ENCODE measurements at regions of chr7 and their contacts with region 1.

Region 1: DNA sequence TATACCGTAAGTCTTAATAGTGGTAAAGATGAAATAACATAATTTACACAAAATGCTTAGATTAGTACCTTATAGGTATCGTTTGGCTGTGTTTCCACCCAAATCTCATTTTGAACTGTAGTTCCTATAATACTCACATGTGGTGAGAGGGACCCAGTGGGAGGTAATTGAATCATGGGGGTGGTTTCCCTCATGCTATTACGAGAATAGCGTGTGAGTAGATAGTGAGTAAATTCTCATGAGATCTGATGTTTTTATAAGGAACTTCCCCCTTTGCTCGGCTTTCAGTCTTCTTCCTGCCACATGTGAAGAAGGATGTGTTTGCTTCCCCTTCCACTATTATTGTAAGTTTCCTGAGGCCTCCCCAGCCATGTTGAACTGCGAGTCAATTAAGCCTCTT is 426.3 kb upstream of the POT1 start:
- DNase-seq: no peak
- H3K4me3 ChIP-seq: no peak overlapping the region
- H3K27ac ChIP-seq: no peak overlapping the region
- H3K4me1 ChIP-seq: no peaks in the 10 kb centered on the region
- H3K27me3 ChIP-seq: no peaks in the 10 kb centered on the region
- CTCF ChIP-seq: no peak

Region 2: GRCh38 chr7:125336326-125336725 is 19.6 kb before region 1 on chr7:
- CTCF ChIA-PET with region 1: no interaction called
- POLR2A ChIA-PET with region 1: no interaction called
- intact Hi-C with region 1: no loop called
- DNase-seq: no peak
- H3K4me3 ChIP-seq: no peak overlapping the region
- H3K27ac ChIP-seq: no peak overlapping the region
- H3K4me1 ChIP-seq: no peaks in the 10 kb centered on the region
- H3K27me3 ChIP-seq: no peaks in the 10 kb centered on the region
- CTCF ChIP-seq: no peak

Region 3: DNA sequence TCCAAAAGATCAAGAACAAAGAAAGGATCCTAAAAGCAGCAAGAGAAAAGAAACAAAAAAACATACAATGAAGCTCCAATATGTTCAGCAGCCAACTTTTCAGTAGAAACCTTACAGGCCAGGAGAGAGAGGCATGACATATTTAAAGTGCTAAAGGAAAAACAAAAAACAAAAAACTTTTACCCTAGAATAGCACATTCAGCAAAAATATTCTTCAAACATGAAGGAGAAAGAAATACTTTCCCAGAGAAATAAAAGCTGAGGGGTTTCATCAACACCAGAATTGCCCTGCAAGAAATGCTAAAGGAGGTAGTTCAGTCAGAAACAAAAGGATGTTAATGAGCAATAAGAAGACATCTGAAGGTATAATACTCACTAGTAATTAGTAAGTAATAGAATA is 327.3 kb after region 1 on chr7:
- CTCF ChIA-PET with region 1: no interaction called
- POLR2A ChIA-PET with region 1: interaction called, 11 read pairs
- intact Hi-C with region 1: no loop called
- DNase-seq: no peak
- H3K4me3 ChIP-seq: no peak overlapping the region
- H3K27ac ChIP-seq: no peak overlapping the region
- H3K4me1 ChIP-seq: no peaks in the 10 kb centered on the region
- H3K27me3 ChIP-seq: no peaks in the 10 kb centered on the region
- CTCF ChIP-seq: no peak

Region 4: GRCh38 chr7:125695626-125696025 is 339.7 kb after region 1 on chr7:
- CTCF ChIA-PET with region 1: no interaction called
- POLR2A ChIA-PET with region 1: no interaction called
- intact Hi-C with region 1: no loop called
- DNase-seq: no peak
- H3K4me3 ChIP-seq: no peak overlapping the region
- H3K27ac ChIP-seq: no peak overlapping the region
- H3K4me1 ChIP-seq: no peaks in the 10 kb centered on the region
- H3K27me3 ChIP-seq: no peaks in the 10 kb centered on the region
- CTCF ChIP-seq: no peak